Vagina (tissue), 2 donors: ENCODE measurements at regions of chr2 and their contacts with region 1.

Region 1: GRCh38 chr2:186503848-186504606 is 18.0 kb downstream of the ZC3H15 start:
- DNase-seq: no peak
- H3K4me3 ChIP-seq: no peak overlapping the region
- H3K27ac ChIP-seq: no peak overlapping the region
- H3K4me1 ChIP-seq: peaks cover 8% of the 10 kb centered on the region
- H3K27me3 ChIP-seq: no peaks in the 10 kb centered on the region
- CTCF ChIP-seq: peak; percentile 16 to 52 (median 50)
- POLR2A ChIP-seq: no peak

Region 2: GRCh38 chr2:186274936-186275575 is 229.0 kb before region 1 on chr2:
- intact Hi-C with region 1: no loop called
- DNase-seq: no peak
- H3K4me3 ChIP-seq: no peak overlapping the region
- H3K27ac ChIP-seq: no peak overlapping the region
- H3K4me1 ChIP-seq: no peaks in the 10 kb centered on the region
- H3K27me3 ChIP-seq: no peaks in the 10 kb centered on the region
- CTCF ChIP-seq: no peak
- POLR2A ChIP-seq: no peak

Region 3: DNA sequence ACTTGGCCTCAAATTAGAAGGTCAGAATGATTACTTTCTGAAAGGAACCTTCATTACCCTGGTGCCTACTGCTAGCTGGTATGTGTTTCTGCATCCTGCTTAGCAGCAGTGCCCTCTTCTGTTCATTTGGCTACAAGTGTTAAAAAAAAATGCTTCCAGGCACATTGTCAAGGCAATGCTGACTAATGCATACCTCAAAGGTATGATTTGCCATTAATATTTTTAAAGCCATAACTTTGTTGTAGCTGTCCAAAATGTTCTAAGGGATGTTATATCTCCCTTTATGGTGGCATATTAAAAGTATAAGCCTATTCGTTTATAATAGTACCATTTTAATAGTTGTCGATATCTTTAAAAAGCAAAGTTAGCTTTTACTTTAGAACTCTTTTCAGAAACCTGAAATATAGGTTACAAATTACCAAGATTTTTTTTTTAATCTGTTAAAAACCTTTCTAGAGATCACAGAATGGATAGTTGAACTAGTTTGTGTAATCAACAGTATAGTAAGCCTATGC is 137.8 kb after region 1 on chr2:
- intact Hi-C with region 1: loop called (anchors 5 kb)
- DNase-seq: no peak
- H3K4me3 ChIP-seq: no peak overlapping the region
- H3K27ac ChIP-seq: no peak overlapping the region
- H3K4me1 ChIP-seq: no peaks in the 10 kb centered on the region
- H3K27me3 ChIP-seq: no peaks in the 10 kb centered on the region
- CTCF ChIP-seq: peak; percentile 2 to 71 (median 47)
- POLR2A ChIP-seq: no peak